Head of caudate nucleus (tissue), 42 donors: ENCODE measurements at regions of chr1 and their contacts with region 1.

Region 1: DNA sequence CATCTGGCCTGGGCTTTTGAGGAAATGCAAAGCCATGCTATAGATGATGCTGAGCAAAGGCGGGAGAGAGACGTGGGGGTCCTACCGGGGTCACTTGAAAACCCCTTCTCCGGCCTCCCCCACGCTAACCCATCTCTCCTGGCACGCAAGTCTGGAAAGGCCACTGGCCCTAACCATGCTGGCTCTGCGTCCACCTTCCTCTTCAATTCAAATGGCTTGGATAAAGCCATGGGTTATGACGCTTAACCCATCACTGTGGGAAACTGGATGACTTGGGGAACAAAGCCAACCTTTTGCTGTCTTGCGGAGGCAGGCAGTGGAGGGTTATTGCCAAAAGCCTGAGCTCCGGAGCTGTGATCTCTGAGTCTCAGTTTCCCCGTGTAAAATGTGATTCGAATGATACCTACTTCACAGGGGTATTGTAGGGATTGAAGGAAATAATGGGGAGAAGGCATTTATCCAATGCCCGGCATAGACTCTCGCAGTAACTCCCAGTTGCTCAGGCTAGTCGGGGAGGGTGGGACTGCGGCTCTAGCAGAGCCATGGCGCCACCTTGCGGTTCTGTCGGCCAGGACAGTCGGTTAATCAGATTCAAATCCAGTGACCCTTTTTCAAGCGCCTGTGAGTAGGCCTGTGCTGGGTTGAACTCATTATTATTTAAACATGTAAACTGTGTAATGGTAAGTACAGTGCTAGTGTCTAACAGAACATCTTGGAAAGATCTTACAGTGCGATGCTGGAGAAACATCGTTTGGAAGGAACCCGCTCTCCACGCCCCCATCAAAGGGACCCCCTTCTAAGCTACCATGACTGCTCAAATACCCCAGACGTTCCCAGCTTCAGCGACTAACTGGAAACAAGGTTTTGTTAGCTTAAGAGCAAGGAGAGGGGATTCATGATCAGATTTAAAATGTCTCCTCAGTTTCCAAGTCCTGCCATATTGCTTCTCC is 20.3 kb downstream of the NEK2 start:
- DNase-seq: peak; percentile 81 to 96 (median 92)

Region 2: GRCh38 chr1:211514030-211514754 is 140.9 kb before region 1 on chr1:
- intact Hi-C with region 1: loop called (anchors 5 kb)
- DNase-seq: peak; percentile 66 to 92 (median 80)

Region 3: GRCh38 chr1:211578640-211579433 is 76.3 kb before region 1 on chr1 and contains the start of gene SLC30A1:
- intact Hi-C with region 1: loop called (anchors 5 kb)
- DNase-seq: peak; percentile 99 to 100 (median 100)

Region 4: GRCh38 chr1:211632631-211633523 is 22.2 kb before region 1 on chr1:
- intact Hi-C with region 1: no loop called
- DNase-seq: peak in 16 of 42 donors; percentile 11 to 49 (median 28)